Endothelial cell of umbilical vein (primary cell): ENCODE measurements at regions of chr11 and their contacts with region 1.

Region 1: DNA sequence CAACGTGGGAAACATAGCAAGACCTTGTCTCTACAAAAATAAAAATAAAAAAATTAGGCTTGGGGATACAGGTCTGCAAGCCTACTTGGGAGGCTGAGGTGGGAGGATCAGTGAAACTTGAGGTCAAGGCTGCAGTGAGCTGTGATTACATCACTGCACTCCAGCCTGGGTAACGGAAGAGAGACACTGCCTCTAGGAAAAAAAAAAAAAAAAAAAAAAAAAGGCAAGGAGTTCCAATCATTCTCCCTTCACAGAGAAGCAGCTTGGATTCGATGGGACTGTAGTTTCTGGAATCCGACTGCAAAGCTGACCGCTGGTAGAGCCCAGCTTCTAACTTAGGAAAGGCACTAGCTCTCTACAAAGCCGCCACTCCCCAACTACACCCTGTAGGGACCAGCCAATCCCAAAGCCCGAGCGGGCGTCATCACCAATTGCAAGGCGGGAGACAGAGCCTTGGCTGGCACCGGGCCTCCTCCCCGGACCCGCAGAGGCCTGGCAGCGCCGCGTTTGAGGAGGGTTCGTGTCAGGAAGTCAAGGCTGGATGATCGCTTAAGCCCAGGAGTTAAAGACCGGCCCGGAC is 699 bp upstream of the DDB2 start:
- DNase-seq: peak; percentile 77
- H3K4me3 ChIP-seq: peak overlapping the region in 2 of 3 experiments; percentile 18 to 58
- H3K27ac ChIP-seq: peak overlapping the region; percentile 40
- H3K4me1 ChIP-seq: peaks cover 23% of the 10 kb centered on the region
- H3K27me3 ChIP-seq: no peaks in the 10 kb centered on the region
- CTCF ChIP-seq: no peak
- POLR2A ChIP-seq: peak; percentile 8

Region 2: DNA sequence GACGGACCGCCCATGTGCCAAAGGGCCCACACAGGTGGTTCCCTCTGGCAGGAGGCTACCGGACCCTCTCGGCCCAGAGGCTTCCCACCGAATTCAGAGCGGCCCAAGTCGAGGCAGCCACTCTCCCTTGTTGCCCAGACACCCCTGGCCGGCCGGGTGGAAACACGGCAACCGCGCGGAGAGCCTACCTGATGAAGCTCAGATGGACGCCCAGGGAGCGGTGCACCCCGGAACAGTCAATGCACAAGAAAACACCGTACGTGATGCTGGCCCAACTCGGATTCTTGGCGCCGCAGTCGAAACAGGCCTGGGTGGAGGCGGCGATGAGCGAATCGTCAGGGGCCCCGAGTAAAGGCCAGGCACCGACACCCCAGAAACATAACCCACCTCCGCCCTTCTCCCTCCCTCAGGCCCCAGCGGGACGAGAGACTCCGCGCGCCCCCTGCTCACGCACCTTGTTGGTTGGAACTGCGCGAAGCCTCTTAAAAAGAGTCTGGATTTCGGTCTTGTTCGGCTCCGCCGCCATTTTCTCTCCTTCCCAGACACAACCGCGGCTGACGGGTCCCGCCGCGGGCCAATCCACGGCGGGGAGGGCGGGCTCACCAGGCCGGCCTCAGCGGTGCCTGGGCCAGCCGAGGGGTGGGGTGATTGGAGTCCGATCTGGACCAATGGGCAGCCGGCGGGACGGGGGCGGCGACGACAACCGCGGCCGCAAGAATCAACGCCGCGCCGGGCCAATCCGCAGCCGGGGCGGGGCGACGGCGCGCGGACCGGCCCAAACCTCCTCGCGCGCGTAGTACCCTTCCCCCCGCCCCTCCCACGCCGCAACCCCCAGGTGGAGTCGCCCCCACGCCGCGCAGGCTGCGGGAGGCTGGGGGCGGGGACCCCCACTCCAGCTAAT is 37.5 kb before region 1 on chr11 and contains the start of gene ARFGAP2:
- CTCF ChIA-PET with region 1: interaction called, 11 read pairs
- POLR2A ChIA-PET with region 1: no interaction called
- dilution Hi-C with region 1: no loop called
- intact Hi-C with region 1: loop called (anchors 1 kb)
- DNase-seq: peak; percentile 97
- H3K4me3 ChIP-seq: peak within 1 kb of the TSS; percentile 69 to 95 (median 79)
- H3K27ac ChIP-seq: peak within 1 kb of the TSS; percentile 91
- H3K4me1 ChIP-seq: peaks cover 13% of the 10 kb centered on the region
- H3K27me3 ChIP-seq: no peaks in the 10 kb centered on the region
- CTCF ChIP-seq: no peak
- POLR2A ChIP-seq: peak; percentile 80
- total RNA-seq, gene ARFGAP2: 78.9 and 84.3 TPM in 2 replicates

Region 3: GRCh38 chr11:47233989-47234668 is 20.1 kb after region 1 on chr11:
- CTCF ChIA-PET with region 1: interaction called, 15 read pairs
- POLR2A ChIA-PET with region 1: no interaction called
- dilution Hi-C with region 1: no loop called
- intact Hi-C with region 1: no loop called
- DNase-seq: peak; percentile 29
- H3K4me3 ChIP-seq: no peak overlapping the region
- H3K27ac ChIP-seq: no peak overlapping the region
- H3K4me1 ChIP-seq: peaks cover 15% of the 10 kb centered on the region
- H3K27me3 ChIP-seq: no peaks in the 10 kb centered on the region
- CTCF ChIP-seq: peak in 1 of 2 donors; percentile 27
- POLR2A ChIP-seq: no peak

Region 4: GRCh38 chr11:47259178-47259977 is 45.3 kb after region 1 on chr11:
- CTCF ChIA-PET with region 1: interaction called, 16 read pairs
- POLR2A ChIA-PET with region 1: no interaction called
- dilution Hi-C with region 1: no loop called
- intact Hi-C with region 1: loop called (anchors 2 kb)
- DNase-seq: peak; percentile 57
- H3K4me3 ChIP-seq: no peak overlapping the region
- H3K27ac ChIP-seq: no peak overlapping the region
- H3K4me1 ChIP-seq: peaks cover 22% of the 10 kb centered on the region
- H3K27me3 ChIP-seq: no peaks in the 10 kb centered on the region
- CTCF ChIP-seq: peak; percentile 75 to 80
- POLR2A ChIP-seq: no peak